Activated CD4-positive, alpha-beta memory T cell treated with anti-CD3 and anti-CD28 coated beads for 36 hours (primary cell): ENCODE measurements at regions of chr10 and their contacts with region 1.

Region 1: DNA sequence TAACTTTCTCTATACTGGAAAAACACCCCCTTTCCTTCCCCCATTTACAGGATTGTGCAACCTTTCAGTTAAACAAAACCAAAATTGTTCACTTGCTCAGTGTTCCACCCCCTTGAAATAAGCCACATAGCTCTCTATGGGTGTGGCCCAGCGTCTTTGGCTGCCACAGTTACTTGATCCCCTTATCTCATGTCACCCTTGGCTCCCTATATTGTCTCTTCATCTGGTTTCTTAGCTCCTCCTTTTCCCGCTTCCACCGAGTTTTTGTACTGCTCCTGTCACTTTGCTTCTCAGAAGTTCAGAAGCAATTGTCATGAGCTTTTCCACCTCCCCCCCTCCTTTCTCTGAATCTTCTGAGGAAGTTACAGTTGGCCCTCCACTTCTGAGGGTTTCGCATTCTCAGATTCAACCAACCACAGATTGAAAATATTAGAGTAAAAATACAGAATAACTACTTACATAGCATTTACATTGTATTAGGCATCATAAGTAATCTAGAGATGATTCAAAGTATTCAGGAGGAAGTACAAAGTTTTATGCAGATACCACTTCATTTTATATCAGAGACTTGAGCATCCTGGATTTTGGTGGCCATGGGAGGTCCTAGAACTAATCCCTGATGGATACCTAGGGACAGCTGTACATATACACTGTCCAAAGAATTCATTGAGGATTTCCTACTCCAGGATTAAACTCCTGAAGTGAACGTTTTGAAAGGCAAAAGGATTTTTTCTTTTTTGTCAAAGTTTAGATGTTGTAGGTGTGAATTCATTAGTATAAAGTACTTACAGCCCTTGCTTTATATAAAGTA is 60.4 kb downstream of the ADD3 start:
- DNase-seq: peak; percentile 72
- H3K4me3 Mint-ChIP-seq: peak overlapping the region; percentile 31
- H3K27ac Mint-ChIP-seq: peak overlapping the region; percentile 88
- H3K4me1 Mint-ChIP-seq: peaks cover 83% of the 10 kb centered on the region
- H3K27me3 Mint-ChIP-seq: no peaks in the 10 kb centered on the region

Region 2: DNA sequence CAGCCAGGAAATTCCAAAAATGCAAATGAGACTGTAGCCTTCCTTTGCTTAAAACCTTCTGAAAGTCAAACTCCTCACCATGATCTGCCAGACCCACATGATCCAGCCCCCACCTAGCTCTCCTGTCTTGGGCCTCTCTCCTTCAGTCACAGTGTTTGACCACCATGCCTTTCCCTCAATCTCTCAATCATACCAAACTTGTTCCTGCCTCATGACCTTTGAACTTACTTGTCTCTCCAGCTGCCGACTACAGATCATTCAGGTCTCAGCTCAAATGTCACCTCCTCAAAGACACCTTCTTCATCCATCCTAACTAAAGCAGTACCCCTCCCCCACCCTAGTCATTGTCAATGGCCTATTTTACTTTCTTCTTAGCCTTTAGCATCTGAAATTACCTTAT is 69.7 kb before region 1 on chr10:
- CTCF ChIA-PET with region 1: no interaction called
- POLR2A ChIA-PET with region 1: no interaction called
- intact Hi-C with region 1: no loop called
- DNase-seq: no peak
- H3K4me3 Mint-ChIP-seq: no peak overlapping the region
- H3K27ac Mint-ChIP-seq: no peak overlapping the region
- H3K4me1 Mint-ChIP-seq: peaks cover 14% of the 10 kb centered on the region
- H3K27me3 Mint-ChIP-seq: no peaks in the 10 kb centered on the region

Region 3: DNA sequence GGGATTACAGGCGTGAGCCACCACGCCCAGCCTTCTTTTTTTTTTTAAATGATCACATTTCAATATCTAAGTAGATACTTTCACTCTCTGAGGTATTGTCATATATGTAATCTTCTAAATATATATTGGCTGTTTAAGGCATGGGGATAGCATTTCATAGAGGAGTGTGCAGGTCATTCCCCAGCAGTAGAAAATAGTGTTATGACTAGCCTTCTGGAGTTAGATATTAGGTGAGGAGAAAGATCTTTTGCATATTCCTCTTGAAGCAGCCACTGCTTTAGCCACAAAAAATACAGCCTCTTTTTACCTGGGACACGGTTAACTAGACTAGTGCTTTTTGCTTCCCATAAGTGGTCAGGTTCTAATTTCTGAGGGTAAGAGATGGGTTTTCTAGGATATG is 31.5 kb before region 1 on chr10:
- CTCF ChIA-PET with region 1: interaction called, 3 read pairs
- POLR2A ChIA-PET with region 1: interaction called, 6 read pairs
- intact Hi-C with region 1: loop called (anchors 2 kb)
- DNase-seq: no peak
- H3K4me3 Mint-ChIP-seq: no peak overlapping the region
- H3K27ac Mint-ChIP-seq: peak overlapping the region; percentile 54
- H3K4me1 Mint-ChIP-seq: peaks cover 83% of the 10 kb centered on the region
- H3K27me3 Mint-ChIP-seq: no peaks in the 10 kb centered on the region

Region 4: GRCh38 chr10:110052916-110053315 is 15.2 kb before region 1 on chr10:
- CTCF ChIA-PET with region 1: interaction called, 7 read pairs
- POLR2A ChIA-PET with region 1: interaction called, 6 read pairs
- intact Hi-C with region 1: loop called (anchors 1 kb)
- DNase-seq: no peak
- H3K4me3 Mint-ChIP-seq: no peak overlapping the region
- H3K27ac Mint-ChIP-seq: peak overlapping the region; percentile 21
- H3K4me1 Mint-ChIP-seq: peaks cover 84% of the 10 kb centered on the region
- H3K27me3 Mint-ChIP-seq: no peaks in the 10 kb centered on the region

Region 5: GRCh38 chr10:110081911-110082310 is 13.7 kb after region 1 on chr10:
- CTCF ChIA-PET with region 1: interaction called, 4 read pairs
- POLR2A ChIA-PET with region 1: interaction called, 20 read pairs
- intact Hi-C with region 1: loop called (anchors 1 kb)
- DNase-seq: no peak
- H3K4me3 Mint-ChIP-seq: peak overlapping the region; percentile 45
- H3K27ac Mint-ChIP-seq: peak overlapping the region; percentile 92
- H3K4me1 Mint-ChIP-seq: peaks cover 87% of the 10 kb centered on the region
- H3K27me3 Mint-ChIP-seq: no peaks in the 10 kb centered on the region

Region 6: GRCh38 chr10:110101464-110102144 is 33.4 kb after region 1 on chr10:
- CTCF ChIA-PET with region 1: no interaction called
- POLR2A ChIA-PET with region 1: no interaction called
- intact Hi-C with region 1: loop called (anchors 5 kb)
- DNase-seq: no peak
- H3K4me3 Mint-ChIP-seq: peak overlapping the region; percentile 29
- H3K27ac Mint-ChIP-seq: peak overlapping the region; percentile 91
- H3K4me1 Mint-ChIP-seq: peaks cover 69% of the 10 kb centered on the region
- H3K27me3 Mint-ChIP-seq: no peaks in the 10 kb centered on the region